ENCODE measurements at regions of chr7 and their contacts with region 1.

Region 1: GRCh38 chr7:44257618-44258422 is 57.0 kb downstream of the YKT6 start:
- DNase-seq: peak; percentile 83
- ATAC-seq: peak; percentile 85

Region 2: GRCh38 chr7:44218418-44219201 is 39.2 kb before region 1 on chr7:
- intact Hi-C with region 1: no loop called
- DNase-seq: peak; percentile 54
- ATAC-seq: no peak

Region 3: DNA sequence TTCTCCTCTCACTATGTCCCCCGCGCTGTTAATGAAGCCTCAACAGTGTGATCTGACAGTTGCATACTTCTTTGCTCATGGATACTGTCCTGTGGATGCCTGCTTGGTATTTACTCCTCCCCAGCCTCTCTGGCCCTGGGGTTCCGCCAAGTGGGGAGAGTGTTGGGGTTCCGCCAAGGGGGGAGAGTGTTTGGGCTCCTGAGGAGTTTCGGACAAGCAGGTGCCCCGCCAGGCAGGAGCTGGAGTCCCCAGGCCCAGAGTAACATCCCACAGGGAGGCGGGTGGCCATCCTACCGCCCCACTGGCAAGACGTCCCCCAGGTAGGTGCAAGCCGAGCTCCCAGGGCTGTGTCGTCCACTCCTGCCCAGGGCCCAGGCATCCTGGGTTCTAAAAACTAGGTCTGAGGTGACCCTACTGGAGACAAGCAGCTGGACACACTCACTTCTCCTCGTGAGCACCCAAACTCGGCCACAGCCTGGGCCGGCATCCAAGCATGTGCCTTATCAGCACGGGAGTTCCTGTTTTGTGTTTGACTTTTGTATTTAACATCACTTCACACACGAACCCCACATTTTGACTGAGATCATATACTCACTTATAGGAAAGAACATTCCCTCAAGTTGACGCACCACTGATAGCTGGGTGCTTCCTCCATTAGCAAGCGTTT is 33.4 kb after region 1 on chr7:
- intact Hi-C with region 1: loop called (anchors 5 kb)
- DNase-seq: peak; percentile 91
- ATAC-seq: peak; percentile 69

Region 4: DNA sequence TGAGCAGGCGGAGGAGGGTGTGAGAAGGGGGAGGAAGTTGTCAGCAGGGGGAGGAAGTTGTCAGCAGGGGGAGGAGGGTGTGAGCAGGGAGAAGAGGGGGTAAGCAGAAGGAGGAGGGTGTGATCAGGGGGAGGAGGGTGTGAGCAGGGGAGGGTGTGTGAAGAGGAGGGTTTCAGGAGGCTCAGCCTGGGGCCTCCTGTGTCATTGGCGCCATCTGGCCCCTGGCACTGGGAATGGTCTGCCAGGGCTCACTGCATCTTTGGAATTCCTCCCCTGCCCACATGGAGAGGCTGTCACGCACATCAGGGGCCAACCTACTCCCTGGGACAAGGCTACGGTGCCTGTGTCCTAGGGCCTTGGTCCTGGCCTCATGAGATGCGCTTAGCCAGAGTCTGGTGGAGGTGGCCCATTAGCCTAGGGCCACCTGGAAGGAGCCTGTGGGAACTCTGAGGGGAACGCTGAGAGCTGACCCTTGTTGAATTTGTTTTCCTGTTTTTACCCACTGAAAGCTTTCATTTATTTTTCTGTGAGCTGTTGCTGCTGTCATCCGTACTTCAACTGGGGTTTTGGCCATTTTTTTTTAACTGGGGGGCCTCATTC is 49.6 kb after region 1 on chr7:
- intact Hi-C with region 1: loop called (anchors 5 kb)
- DNase-seq: peak; percentile 73
- ATAC-seq: peak; percentile 68